Common myeloid progenitor, CD34-positive (primary cell): ENCODE measurements at regions of chr11 and their contacts with region 1.

Region 1: DNA sequence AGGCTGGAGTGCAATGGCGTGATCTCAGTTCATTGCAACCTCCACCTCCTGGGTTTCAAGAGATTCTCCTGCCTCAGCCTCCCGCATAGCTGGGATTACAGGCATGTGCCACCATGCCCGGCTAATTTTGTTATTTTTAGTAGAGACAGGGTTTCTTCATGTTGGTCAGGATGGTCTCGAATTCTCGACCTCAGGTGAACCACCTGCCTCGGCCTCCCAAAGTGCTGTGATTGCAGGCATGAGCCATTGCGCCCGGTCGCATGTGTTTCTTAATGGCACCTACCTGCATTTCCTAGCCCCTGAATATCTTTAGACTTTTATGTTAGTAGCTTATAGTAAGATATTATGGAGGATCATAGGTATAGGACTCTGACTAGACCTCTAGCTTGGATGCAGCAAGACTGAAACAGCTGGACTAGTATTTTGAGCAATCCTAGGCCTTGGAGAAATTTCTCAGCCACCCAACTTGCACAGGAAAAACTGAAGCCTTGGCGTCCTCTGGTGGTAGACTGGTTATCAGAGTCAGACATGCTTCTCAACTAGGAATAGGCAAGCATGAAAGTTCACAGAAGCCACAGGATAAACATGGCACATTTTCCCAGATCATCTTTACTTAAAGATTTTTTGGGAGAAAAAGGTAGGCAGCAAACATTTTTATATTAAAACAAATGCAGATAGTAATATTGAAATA is 22.7 kb upstream of the C1QTNF4 start:
- DNase-seq: peak; percentile 74 to 87 (median 81)
- H3K4me3 ChIP-seq: peak overlapping the region in 1 of 7 experiments; percentile 4
- H3K27ac ChIP-seq: peak overlapping the region; percentile 20 to 69
- H3K4me1 ChIP-seq: peaks cover under 1 to 40% (median 27%) of the 10 kb centered on the region in 4 experiments
- H3K27me3 ChIP-seq: no peaks in the 10 kb centered on the region

Region 2: DNA sequence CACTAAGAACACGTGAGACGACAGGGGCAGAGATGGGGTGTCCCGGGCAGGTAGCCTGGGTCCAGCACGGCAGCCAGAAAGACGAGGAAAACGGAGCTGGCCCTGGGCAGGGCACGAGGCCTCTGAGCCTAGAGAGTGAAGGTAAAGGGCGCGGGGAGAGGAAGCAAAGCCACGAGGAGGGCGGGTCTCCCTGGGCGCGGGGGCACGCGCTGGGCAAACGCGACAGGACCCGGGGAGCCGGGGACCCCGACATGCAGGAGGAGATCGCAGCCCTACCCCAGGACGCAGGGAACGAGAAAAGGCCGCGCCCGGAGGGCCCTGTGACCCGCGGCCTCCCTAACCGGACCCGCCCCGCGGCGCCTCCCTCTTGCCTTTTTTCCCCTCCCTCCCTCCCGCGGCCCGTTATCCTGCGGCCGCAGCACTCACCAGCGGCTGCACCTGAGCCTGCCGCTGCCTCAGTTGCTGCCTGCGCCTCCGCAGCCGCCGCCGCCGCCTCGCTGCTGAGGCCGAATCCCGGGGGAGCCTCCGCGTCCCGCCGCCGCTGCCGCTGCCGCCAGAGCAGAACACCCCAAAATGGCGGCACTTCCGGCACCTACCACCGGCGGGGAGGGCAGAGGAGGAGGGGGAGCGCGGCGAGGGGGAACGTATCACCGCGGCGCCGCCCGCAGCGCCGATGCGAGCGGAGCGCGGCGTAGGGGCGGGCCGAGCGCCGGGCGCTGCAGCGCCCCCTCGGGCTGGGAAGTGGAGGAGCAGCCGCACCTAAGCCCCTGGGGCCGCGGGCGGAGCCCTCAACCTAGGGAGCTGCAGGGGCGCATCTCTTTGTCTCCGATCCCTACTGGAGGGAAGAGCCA is 64.1 kb before region 1 on chr11 and contains the start of gene CELF1:
- CTCF ChIA-PET with region 1: interaction called, 27 read pairs
- POLR2A ChIA-PET with region 1: no interaction called
- DNase-seq: peak; percentile 93 to 96 (median 96)
- H3K4me3 ChIP-seq: peak within 1 kb of the TSS; percentile 72 to 97 (median 88)
- H3K27ac ChIP-seq: peak within 1 kb of the TSS; percentile 64 to 94
- H3K4me1 ChIP-seq: peaks cover 18 to 35% (median 31%) of the 10 kb centered on the region in 4 experiments
- H3K27me3 ChIP-seq: no peaks in the 10 kb centered on the region

Region 3: GRCh38 chr11:47565340-47566148 is 51.3 kb before region 1 on chr11 and contains the start of gene PTPMT1:
- CTCF ChIA-PET with region 1: interaction called, 10 read pairs
- POLR2A ChIA-PET with region 1: no interaction called
- DNase-seq: peak; percentile 63 to 81 (median 72)
- H3K4me3 ChIP-seq: peak within 1 kb of the TSS; percentile 19 to 93 (median 83)
- H3K27ac ChIP-seq: peak within 1 kb of the TSS; percentile 80 to 90
- H3K4me1 ChIP-seq: peaks cover 6 to 16% (median 14%) of the 10 kb centered on the region in 4 experiments
- H3K27me3 ChIP-seq: no peaks in the 10 kb centered on the region

Region 4: DNA sequence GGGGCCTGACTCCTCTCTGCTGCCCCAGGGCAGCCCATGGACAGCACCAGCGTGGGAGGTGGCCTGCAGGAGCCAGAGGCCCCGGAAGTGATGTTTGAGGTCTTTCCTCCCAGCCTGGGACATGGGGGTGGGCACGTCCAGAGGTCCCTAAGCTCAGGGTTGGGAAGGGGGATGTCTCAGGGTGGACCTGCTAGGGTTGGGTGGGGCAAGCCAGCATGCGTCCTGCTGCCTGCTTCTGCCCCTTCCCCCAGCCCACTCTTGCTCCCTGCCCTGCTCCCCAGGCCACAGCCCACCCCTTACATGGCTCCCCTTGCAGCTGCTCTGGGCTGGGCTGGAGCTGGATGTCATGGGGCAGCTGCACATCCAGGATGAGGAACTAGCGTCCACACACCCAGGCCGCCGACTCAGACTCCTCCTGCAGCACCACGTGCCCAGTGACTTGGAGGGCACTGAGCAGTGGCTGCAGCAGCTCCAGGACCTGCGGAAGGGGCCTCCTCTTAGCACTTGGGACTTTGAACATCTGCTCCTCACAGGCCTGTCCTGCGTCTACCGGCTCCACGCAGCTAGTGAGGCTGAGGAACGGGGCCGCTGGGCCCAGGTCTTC is 29.0 kb before region 1 on chr11:
- CTCF ChIA-PET with region 1: interaction called, 10 read pairs
- POLR2A ChIA-PET with region 1: no interaction called
- DNase-seq: peak; percentile 53 to 88 (median 84)
- H3K4me3 ChIP-seq: peak overlapping the region in 5 of 7 experiments; percentile 32 to 68 (median 61)
- H3K27ac ChIP-seq: peak overlapping the region in 1 of 2 experiments; percentile 71
- H3K4me1 ChIP-seq: peaks cover 4 to 62% (median 60%) of the 10 kb centered on the region in 4 experiments
- H3K27me3 ChIP-seq: no peaks in the 10 kb centered on the region

Region 5: GRCh38 chr11:47593934-47594855 is 22.7 kb before region 1 on chr11 and contains the start of gene C1QTNF4:
- CTCF ChIA-PET with region 1: interaction called, 10 read pairs
- POLR2A ChIA-PET with region 1: interaction called, 7 read pairs
- DNase-seq: peak in 1 of 3 donors; percentile 49
- H3K4me3 ChIP-seq: peak within 1 kb of the TSS; percentile 53 to 88 (median 74)
- H3K27ac ChIP-seq: peak within 1 kb of the TSS in 1 of 2 experiments; percentile 43
- H3K4me1 ChIP-seq: peaks cover 8 to 54% (median 54%) of the 10 kb centered on the region in 4 experiments
- H3K27me3 ChIP-seq: no peaks in the 10 kb centered on the region

Region 6: GRCh38 chr11:47628026-47628425 is 11.2 kb after region 1 on chr11:
- CTCF ChIA-PET with region 1: interaction called, 10 read pairs
- POLR2A ChIA-PET with region 1: no interaction called
- DNase-seq: no peak
- H3K4me3 ChIP-seq: no peak overlapping the region
- H3K27ac ChIP-seq: no peak overlapping the region
- H3K4me1 ChIP-seq: no peaks in the 10 kb centered on the region
- H3K27me3 ChIP-seq: no peaks in the 10 kb centered on the region

Region 7: GRCh38 chr11:47686151-47686550 is 69.3 kb after region 1 on chr11:
- CTCF ChIA-PET with region 1: no interaction called
- POLR2A ChIA-PET with region 1: no interaction called
- DNase-seq: no peak
- H3K4me3 ChIP-seq: no peak overlapping the region
- H3K27ac ChIP-seq: no peak overlapping the region
- H3K4me1 ChIP-seq: no peaks in the 10 kb centered on the region
- H3K27me3 ChIP-seq: no peaks in the 10 kb centered on the region